Activated T-helper 2 cell treated with anti-CD3 and anti-CD28 coated beads, Interferon-gamma antibody, Interleukin-2, Interleukin-4, amounts not matched to agents 10 μg/mL and 5 μg/mL and 100 μg/mL, durations not matched to agents 14 hours and 24 hours and 36 hours (primary cell): ENCODE measurements at regions of chr4 and their contacts with region 1.

Region 1: DNA sequence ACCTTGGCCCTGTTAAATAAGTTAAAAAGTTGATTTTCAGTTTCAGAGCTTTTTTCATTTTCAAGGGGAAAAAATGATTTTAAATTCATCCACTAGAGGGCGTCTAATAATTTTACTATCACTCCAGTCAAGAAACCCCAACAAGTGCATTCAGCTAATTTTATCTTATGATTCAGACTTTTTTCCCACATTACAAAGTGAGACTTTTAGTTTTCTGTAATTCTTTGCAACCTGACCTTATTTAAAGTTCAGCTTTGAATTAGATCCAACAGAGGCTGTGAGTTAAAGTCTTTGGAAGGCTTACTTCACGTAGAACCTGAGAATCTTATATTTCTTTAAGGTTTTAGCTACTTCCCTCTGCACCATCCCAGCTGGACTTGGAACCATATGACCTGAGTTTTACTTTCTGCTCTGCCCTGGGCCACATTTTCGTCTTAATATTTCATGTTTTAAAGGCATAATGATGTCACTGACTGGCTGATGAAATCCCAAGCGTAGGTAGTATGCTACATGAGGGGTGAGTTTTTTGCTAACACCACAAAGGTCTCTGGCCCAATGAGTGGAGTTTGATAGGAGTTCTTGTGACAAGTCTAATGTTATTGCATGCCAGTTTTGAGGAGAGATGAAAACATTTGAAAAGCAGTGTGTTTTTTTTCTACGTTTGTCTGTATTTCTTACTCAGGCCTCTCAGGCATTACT is 7.2 kb downstream of the GNRHR start:
- DNase-seq: no peak
- H3K4me3 Mint-ChIP-seq: no peak overlapping the region
- H3K27ac Mint-ChIP-seq: peak overlapping the region; percentile 2
- H3K4me1 Mint-ChIP-seq: peaks cover 17% of the 10 kb centered on the region
- H3K27me3 Mint-ChIP-seq: no peaks in the 10 kb centered on the region

Region 2: GRCh38 chr4:67531379-67531962 is 215.5 kb before region 1 on chr4:
- intact Hi-C with region 1: no loop called
- DNase-seq: no peak
- H3K4me3 Mint-ChIP-seq: no peak overlapping the region
- H3K27ac Mint-ChIP-seq: no peak overlapping the region
- H3K4me1 Mint-ChIP-seq: peaks cover 22% of the 10 kb centered on the region
- H3K27me3 Mint-ChIP-seq: no peaks in the 10 kb centered on the region

Region 3: DNA sequence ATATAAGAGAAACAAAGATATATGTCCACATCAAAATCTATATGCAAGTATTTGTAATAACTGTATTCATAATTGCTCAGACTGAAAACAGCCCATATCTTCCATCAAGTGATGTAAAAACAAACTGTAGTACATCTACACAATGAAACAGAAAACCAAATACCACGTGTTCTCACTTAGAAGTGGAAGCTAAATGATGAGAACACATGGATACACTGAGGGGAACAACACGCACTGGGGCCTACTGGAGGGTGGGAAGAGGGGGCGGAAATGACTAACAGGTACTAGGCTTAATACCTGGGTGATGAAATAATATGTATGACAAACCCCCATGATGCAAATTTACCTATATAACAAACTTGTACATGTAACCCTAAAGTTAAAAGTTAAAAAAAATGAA is 88.6 kb before region 1 on chr4:
- intact Hi-C with region 1: no loop called
- DNase-seq: no peak
- H3K4me3 Mint-ChIP-seq: no peak overlapping the region
- H3K27ac Mint-ChIP-seq: peak overlapping the region; percentile 35
- H3K4me1 Mint-ChIP-seq: peaks cover 10% of the 10 kb centered on the region
- H3K27me3 Mint-ChIP-seq: no peaks in the 10 kb centered on the region

Region 4: DNA sequence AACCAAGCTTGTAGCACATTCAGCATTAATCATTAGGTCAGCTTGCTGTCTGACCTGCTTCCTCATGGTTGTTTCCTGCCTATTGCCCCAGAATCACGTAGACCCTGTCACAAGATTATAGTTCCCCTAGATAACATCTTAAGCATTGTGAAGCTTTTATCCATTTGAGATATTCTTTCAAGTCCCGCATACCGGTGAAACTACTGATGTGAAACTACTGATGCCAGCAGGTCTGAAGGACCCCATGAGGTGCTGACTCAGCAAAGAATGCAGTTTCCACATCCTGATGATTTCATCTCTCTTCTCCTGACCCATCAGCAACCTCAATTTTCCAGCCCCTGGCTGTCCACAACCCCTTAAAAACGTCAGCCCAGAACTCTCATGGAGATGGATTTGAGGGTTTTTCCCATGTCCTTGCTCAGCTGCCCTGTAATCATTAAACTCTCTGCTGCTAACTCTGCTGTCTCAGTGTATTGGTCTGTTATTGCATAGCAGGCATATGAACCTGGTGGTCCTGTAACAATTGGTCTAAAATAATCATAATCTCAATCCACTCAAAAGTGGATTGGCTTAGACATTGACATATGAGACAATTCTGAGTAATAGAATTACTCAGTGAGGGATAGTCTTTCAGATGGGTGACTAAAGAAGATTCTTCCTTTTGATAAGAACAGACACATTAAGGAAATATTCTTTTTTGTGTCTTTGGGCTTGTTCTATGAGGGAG is 19.7 kb before region 1 on chr4:
- intact Hi-C with region 1: loop called (anchors 2 kb)
- DNase-seq: no peak
- H3K4me3 Mint-ChIP-seq: no peak overlapping the region
- H3K27ac Mint-ChIP-seq: peak overlapping the region; percentile 56
- H3K4me1 Mint-ChIP-seq: peaks cover 14% of the 10 kb centered on the region
- H3K27me3 Mint-ChIP-seq: no peaks in the 10 kb centered on the region

Region 5: GRCh38 chr4:67762086-67762485 is 15.1 kb after region 1 on chr4:
- intact Hi-C with region 1: loop called (anchors 2 kb)
- DNase-seq: no peak
- H3K4me3 Mint-ChIP-seq: no peak overlapping the region
- H3K27ac Mint-ChIP-seq: no peak overlapping the region
- H3K4me1 Mint-ChIP-seq: peaks cover 4% of the 10 kb centered on the region
- H3K27me3 Mint-ChIP-seq: no peaks in the 10 kb centered on the region

Region 6: GRCh38 chr4:67909905-67910584 is 163.1 kb after region 1 on chr4:
- intact Hi-C with region 1: loop called (anchors 10 kb)
- DNase-seq: no peak
- H3K4me3 Mint-ChIP-seq: no peak overlapping the region
- H3K27ac Mint-ChIP-seq: no peak overlapping the region
- H3K4me1 Mint-ChIP-seq: no peaks in the 10 kb centered on the region
- H3K27me3 Mint-ChIP-seq: peaks cover 15% of the 10 kb centered on the region

Region 7: GRCh38 chr4:68617003-68617698 is 870.2 kb after region 1 on chr4:
- intact Hi-C with region 1: no loop called
- DNase-seq: no peak
- H3K4me3 Mint-ChIP-seq: no peak overlapping the region
- H3K27ac Mint-ChIP-seq: no peak overlapping the region
- H3K4me1 Mint-ChIP-seq: no peaks in the 10 kb centered on the region
- H3K27me3 Mint-ChIP-seq: no peaks in the 10 kb centered on the region